B cell (primary cell): ENCODE measurements at regions of chr19 and their contacts with region 1.

Region 1: GRCh38 chr19:43446746-43447489 is 18.5 kb downstream of the LYPD3 start:
- DNase-seq: peak; percentile 86
- ATAC-seq: peak; percentile 89
- H3K4me3 ChIP-seq: no peak overlapping the region
- H3K4me3 Mint-ChIP-seq: no peak overlapping the region
- H3K27ac ChIP-seq: no peak overlapping the region
- H3K27ac Mint-ChIP-seq: peak overlapping the region; percentile 8
- H3K4me1 ChIP-seq: peaks cover 0 to 7% of the 10 kb centered on the region in 2 donors
- H3K4me1 Mint-ChIP-seq: peaks cover 5% of the 10 kb centered on the region
- H3K27me3 ChIP-seq: no peaks in the 10 kb centered on the region
- H3K27me3 Mint-ChIP-seq: no peaks in the 10 kb centered on the region
- CTCF ChIP-seq: peak; percentile 95

Region 2: GRCh38 chr19:43316592-43317319 is 130.2 kb before region 1 on chr19:
- CTCF ChIA-PET with region 1: no interaction called
- POLR2A ChIA-PET with region 1: no interaction called
- intact Hi-C with region 1: no loop called
- DNase-seq: no peak
- ATAC-seq: no peak
- H3K4me3 ChIP-seq: no peak overlapping the region
- H3K4me3 Mint-ChIP-seq: no peak overlapping the region
- H3K27ac ChIP-seq: no peak overlapping the region
- H3K27ac Mint-ChIP-seq: no peak overlapping the region
- H3K4me1 ChIP-seq: no peaks in the 10 kb centered on the region
- H3K4me1 Mint-ChIP-seq: no peaks in the 10 kb centered on the region
- H3K27me3 ChIP-seq: no peaks in the 10 kb centered on the region
- H3K27me3 Mint-ChIP-seq: peaks cover 8% of the 10 kb centered on the region
- CTCF ChIP-seq: no peak

Region 3: GRCh38 chr19:43380771-43381386 is 66.0 kb before region 1 on chr19:
- CTCF ChIA-PET with region 1: no interaction called
- POLR2A ChIA-PET with region 1: no interaction called
- intact Hi-C with region 1: no loop called
- DNase-seq: no peak
- ATAC-seq: no peak
- H3K4me3 ChIP-seq: no peak overlapping the region
- H3K4me3 Mint-ChIP-seq: no peak overlapping the region
- H3K27ac ChIP-seq: no peak overlapping the region
- H3K27ac Mint-ChIP-seq: no peak overlapping the region
- H3K4me1 ChIP-seq: peaks cover 0 to 3% of the 10 kb centered on the region in 2 donors
- H3K4me1 Mint-ChIP-seq: peaks cover under 1% of the 10 kb centered on the region
- H3K27me3 ChIP-seq: peaks cover 0 to 3% (median 0%) of the 10 kb centered on the region in 4 experiments
- H3K27me3 Mint-ChIP-seq: peaks cover 3% of the 10 kb centered on the region
- CTCF ChIP-seq: no peak

Region 4: GRCh38 chr19:43430142-43430710 is 16.7 kb before region 1 on chr19:
- CTCF ChIA-PET with region 1: interaction called, 50 read pairs
- POLR2A ChIA-PET with region 1: interaction called, 3 read pairs
- intact Hi-C with region 1: no loop called
- DNase-seq: no peak
- ATAC-seq: peak; percentile 49
- H3K4me3 ChIP-seq: no peak overlapping the region
- H3K4me3 Mint-ChIP-seq: no peak overlapping the region
- H3K27ac ChIP-seq: peak overlapping the region in 1 of 2 donors; percentile 39
- H3K27ac Mint-ChIP-seq: no peak overlapping the region
- H3K4me1 ChIP-seq: peaks cover 8% of the 10 kb centered on the region in 2 donors
- H3K4me1 Mint-ChIP-seq: peaks cover 25% of the 10 kb centered on the region
- H3K27me3 ChIP-seq: peaks cover 0 to 2% (median 0%) of the 10 kb centered on the region in 4 experiments
- H3K27me3 Mint-ChIP-seq: no peaks in the 10 kb centered on the region
- CTCF ChIP-seq: peak; percentile 10

Region 5: GRCh38 chr19:43463381-43464136 is 16.6 kb after region 1 on chr19:
- CTCF ChIA-PET with region 1: interaction called, 40 read pairs
- POLR2A ChIA-PET with region 1: no interaction called
- intact Hi-C with region 1: no loop called
- DNase-seq: peak; percentile 98
- ATAC-seq: peak; percentile 92
- H3K4me3 ChIP-seq: peak overlapping the region; percentile 13 to 96 (median 77)
- H3K4me3 Mint-ChIP-seq: peak overlapping the region; percentile 97
- H3K27ac ChIP-seq: peak overlapping the region; percentile 30 to 40
- H3K27ac Mint-ChIP-seq: peak overlapping the region; percentile 85
- H3K4me1 ChIP-seq: peaks cover 8 to 14% of the 10 kb centered on the region in 2 donors
- H3K4me1 Mint-ChIP-seq: peaks cover 15% of the 10 kb centered on the region
- H3K27me3 ChIP-seq: peaks cover 0 to 12% (median 5%) of the 10 kb centered on the region in 4 experiments
- H3K27me3 Mint-ChIP-seq: peaks cover 4% of the 10 kb centered on the region
- CTCF ChIP-seq: no peak

Region 6: DNA sequence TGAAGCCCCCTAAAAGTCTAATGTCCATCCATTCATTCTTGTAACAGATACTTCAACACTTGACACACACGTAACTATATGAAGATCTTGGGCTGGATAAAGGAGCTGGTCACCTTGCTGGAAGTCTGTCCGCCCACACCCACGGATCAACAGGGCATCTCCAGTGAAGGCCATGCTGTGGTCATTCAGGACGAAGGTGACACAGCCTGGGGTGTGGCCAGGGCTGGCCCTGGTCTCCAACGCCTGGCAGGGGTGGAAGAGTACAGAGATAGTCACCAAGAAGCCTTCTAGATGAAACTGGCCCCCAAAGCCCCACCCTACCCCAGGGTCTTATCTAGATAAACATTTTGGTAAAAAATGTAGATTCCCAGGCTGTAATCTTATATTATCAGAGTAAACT is 64.4 kb after region 1 on chr19:
- CTCF ChIA-PET with region 1: interaction called, 644 read pairs
- POLR2A ChIA-PET with region 1: interaction called, 7 read pairs
- intact Hi-C with region 1: no loop called
- DNase-seq: no peak
- ATAC-seq: no peak
- H3K4me3 ChIP-seq: no peak overlapping the region
- H3K4me3 Mint-ChIP-seq: no peak overlapping the region
- H3K27ac ChIP-seq: no peak overlapping the region
- H3K27ac Mint-ChIP-seq: no peak overlapping the region
- H3K4me1 ChIP-seq: no peaks in the 10 kb centered on the region
- H3K4me1 Mint-ChIP-seq: no peaks in the 10 kb centered on the region
- H3K27me3 ChIP-seq: no peaks in the 10 kb centered on the region
- H3K27me3 Mint-ChIP-seq: no peaks in the 10 kb centered on the region
- CTCF ChIP-seq: no peak

Region 7: GRCh38 chr19:43526884-43527859 is 80.3 kb after region 1 on chr19 and contains the start of gene ETHE1:
- CTCF ChIA-PET with region 1: interaction called, 644 read pairs
- POLR2A ChIA-PET with region 1: no interaction called
- intact Hi-C with region 1: no loop called
- DNase-seq: peak; percentile 69
- ATAC-seq: peak; percentile 94
- H3K4me3 ChIP-seq: peak within 1 kb of the TSS; percentile 58 to 78 (median 72)
- H3K4me3 Mint-ChIP-seq: peak within 1 kb of the TSS; percentile 98
- H3K27ac ChIP-seq: peak within 1 kb of the TSS; percentile 16 to 63
- H3K27ac Mint-ChIP-seq: peak within 1 kb of the TSS; percentile 88
- H3K4me1 ChIP-seq: peaks cover 20 to 34% of the 10 kb centered on the region in 2 donors
- H3K4me1 Mint-ChIP-seq: peaks cover 32% of the 10 kb centered on the region
- H3K27me3 ChIP-seq: no peaks in the 10 kb centered on the region
- H3K27me3 Mint-ChIP-seq: no peaks in the 10 kb centered on the region
- CTCF ChIP-seq: no peak
- total RNA-seq, gene ETHE1: 16.0 and 22.3 TPM in 2 replicates

Region 8: GRCh38 chr19:43651758-43652545 is 205.0 kb after region 1 on chr19:
- CTCF ChIA-PET with region 1: interaction called, 22 read pairs
- POLR2A ChIA-PET with region 1: no interaction called
- intact Hi-C with region 1: no loop called
- DNase-seq: peak; percentile 75
- ATAC-seq: peak; percentile 54
- H3K4me3 ChIP-seq: no peak overlapping the region
- H3K4me3 Mint-ChIP-seq: no peak overlapping the region
- H3K27ac ChIP-seq: no peak overlapping the region
- H3K27ac Mint-ChIP-seq: no peak overlapping the region
- H3K4me1 ChIP-seq: peaks cover 0 to 5% of the 10 kb centered on the region in 2 donors
- H3K4me1 Mint-ChIP-seq: peaks cover 3% of the 10 kb centered on the region
- H3K27me3 ChIP-seq: no peaks in the 10 kb centered on the region
- H3K27me3 Mint-ChIP-seq: no peaks in the 10 kb centered on the region
- CTCF ChIP-seq: peak; percentile 72

Region 9: DNA sequence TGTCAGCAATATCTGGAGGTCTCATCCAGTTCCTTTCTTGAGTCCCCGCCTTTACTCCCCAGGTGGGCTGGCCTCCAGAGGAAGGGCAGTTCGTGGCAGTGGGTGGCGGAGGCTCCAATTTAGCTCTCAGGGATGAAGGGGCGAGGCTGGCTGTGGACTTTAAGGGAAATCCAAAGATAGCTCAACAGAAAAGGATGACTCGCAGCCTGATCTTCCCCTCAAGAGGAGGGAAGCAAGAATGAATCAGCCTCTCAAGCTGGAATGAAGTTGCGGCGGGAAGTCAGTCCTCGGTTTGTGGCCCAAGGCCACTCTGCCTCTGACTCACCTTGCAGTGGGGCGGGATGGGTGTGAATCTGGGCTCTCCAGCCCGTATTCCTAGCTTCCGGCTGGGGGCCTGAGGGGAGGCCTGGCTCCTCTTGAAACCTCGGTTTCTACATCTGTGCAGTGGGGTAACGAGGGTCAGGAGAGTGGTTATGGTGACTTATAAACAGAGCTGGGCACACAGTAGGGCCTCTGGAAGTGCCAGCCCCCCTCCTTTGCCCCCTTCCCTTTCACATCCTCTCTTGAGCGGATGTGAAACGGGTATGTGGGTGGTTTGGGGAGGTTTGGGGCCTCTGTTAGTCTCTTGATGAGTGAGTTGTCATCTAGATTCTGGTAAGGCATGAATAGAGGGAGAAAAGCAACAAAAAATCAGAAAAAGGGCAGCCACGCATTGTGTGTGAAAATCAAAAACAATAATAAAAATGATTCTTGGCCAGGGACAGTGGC is 318.4 kb after region 1 on chr19:
- CTCF ChIA-PET with region 1: no interaction called
- POLR2A ChIA-PET with region 1: no interaction called
- intact Hi-C with region 1: no loop called
- DNase-seq: peak; percentile 82
- ATAC-seq: peak; percentile 86
- H3K4me3 ChIP-seq: peak overlapping the region in 2 of 5 experiments; percentile 23 to 34
- H3K4me3 Mint-ChIP-seq: peak overlapping the region; percentile 72
- H3K27ac ChIP-seq: peak overlapping the region; percentile 88 to 92
- H3K27ac Mint-ChIP-seq: peak overlapping the region; percentile 87
- H3K4me1 ChIP-seq: peaks cover 42 to 57% of the 10 kb centered on the region in 2 donors
- H3K4me1 Mint-ChIP-seq: peaks cover 61% of the 10 kb centered on the region
- H3K27me3 ChIP-seq: no peaks in the 10 kb centered on the region
- H3K27me3 Mint-ChIP-seq: no peaks in the 10 kb centered on the region
- CTCF ChIP-seq: no peak

Region 10: DNA sequence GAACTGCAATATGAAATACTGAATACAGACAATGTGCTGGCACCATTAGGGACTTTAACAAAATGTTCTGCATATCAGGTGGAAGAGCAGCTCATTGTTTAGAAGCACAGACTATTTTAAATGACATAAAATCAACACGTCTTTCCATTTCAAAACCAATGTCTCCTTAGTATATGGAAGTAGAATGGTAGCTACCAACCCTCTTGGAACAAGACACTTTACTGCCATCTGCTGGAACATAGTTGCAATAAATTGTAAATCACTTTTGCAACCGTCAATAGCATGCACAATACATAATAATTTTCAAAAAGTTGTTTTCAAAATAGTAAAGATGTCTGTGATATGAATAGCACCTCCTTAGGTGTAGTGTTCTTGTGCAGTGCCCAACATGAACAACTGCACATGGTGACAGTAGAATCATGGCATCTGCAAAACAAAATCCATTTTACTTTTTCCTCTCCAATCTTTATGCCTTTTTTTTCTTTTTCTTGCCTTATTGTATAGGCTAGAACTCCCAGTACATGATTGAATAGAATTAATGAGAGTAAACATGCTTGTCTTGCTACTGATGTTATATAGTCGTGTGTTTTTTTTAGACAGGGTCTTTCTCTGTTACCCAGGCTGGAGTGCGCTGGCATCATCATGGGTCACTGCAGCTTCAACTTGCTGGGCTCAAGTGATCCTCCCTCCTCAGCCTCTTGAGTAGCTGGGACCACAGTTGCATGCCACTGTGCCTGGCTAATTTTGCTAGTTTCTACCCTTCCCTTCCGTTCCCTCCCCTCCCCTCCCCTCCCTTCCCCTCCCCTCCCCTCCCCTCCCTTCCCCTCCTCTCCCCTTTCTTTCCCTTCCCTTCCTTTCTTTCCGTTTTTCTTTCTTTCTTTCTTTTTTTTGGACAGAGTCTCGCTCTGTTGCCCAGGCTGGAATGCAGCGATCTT is 363.1 kb after region 1 on chr19:
- CTCF ChIA-PET with region 1: interaction called, 14 read pairs
- POLR2A ChIA-PET with region 1: no interaction called
- intact Hi-C with region 1: loop called (anchors 5 kb)
- DNase-seq: peak; percentile 70
- ATAC-seq: peak; percentile 39
- H3K4me3 ChIP-seq: no peak overlapping the region
- H3K4me3 Mint-ChIP-seq: no peak overlapping the region
- H3K27ac ChIP-seq: no peak overlapping the region
- H3K27ac Mint-ChIP-seq: no peak overlapping the region
- H3K4me1 ChIP-seq: no peaks in the 10 kb centered on the region
- H3K4me1 Mint-ChIP-seq: no peaks in the 10 kb centered on the region
- H3K27me3 ChIP-seq: peaks cover 0 to 6% (median 1%) of the 10 kb centered on the region in 4 experiments
- H3K27me3 Mint-ChIP-seq: peaks cover 37% of the 10 kb centered on the region
- CTCF ChIP-seq: peak; percentile 83